H1 (cell line): ENCODE measurements at regions of chr20 and their contacts with region 1.

Region 1: DNA sequence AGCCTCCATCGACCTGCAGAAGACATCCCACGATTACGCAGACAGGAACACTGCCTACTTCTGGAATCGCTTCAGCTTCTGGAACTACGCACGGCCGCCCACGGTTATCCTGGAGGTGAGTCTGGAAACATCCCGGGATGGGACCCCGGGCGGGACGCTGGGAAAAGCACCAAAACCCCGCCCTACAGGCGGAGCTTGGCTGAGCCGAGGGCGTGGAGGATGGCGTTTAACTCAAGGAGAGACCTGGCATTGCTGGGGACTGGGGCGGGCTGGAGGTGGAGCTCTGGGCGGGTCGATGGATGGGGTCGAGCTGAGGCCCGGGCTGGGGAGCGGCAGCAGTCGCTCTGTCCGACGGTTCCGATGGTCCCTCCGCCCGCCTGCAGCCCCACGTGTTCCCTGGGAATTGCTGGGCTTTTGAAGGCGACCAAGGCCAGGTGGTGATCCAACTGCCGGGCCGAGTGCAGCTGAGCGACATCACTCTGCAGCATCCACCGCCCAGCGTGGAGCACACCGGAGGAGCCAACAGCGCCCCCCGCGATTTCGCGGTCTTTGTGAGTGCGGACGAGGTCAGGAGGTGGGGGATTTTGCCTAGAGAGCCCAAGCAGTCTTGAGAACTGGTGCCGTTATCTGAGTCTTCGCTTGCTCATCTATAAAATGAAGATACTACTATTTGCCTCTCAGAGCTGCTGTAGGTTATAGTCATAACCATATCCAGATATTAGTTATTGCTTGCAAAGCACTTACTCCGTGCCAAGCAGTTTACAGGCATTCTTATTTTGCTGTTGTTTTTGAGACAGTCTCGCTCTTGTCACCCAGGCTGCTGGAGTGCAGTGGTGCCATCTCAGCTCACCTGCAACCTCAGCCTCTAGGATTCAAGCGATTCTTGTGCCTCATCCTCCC is 3.8 kb downstream of the SPAG4 start:
- DNase-seq: peak; percentile 73 to 95
- H3K4me3 ChIP-seq: peak overlapping the region; percentile 44 to 63 (median 55)
- H3K27ac ChIP-seq: no peak overlapping the region
- H3K4me1 ChIP-seq: peaks cover 0 to 19% (median 8%) of the 10 kb centered on the region in 4 experiments; a peak in 6 of 7 replicates
- H3K27me3 ChIP-seq: peaks cover 0 to 8% (median 7%) of the 10 kb centered on the region in 4 experiments; a peak in 3 of 7 replicates
- CTCF ChIP-seq: peak; percentile 64 to 79 (median 71)
- EP300 ChIP-seq: no peak
- POLR2A ChIP-seq: peak; percentile 26 to 79
- RAD21 ChIP-seq: peak; percentile 29 to 46; a peak in 3 of 4 replicates

Region 2: DNA sequence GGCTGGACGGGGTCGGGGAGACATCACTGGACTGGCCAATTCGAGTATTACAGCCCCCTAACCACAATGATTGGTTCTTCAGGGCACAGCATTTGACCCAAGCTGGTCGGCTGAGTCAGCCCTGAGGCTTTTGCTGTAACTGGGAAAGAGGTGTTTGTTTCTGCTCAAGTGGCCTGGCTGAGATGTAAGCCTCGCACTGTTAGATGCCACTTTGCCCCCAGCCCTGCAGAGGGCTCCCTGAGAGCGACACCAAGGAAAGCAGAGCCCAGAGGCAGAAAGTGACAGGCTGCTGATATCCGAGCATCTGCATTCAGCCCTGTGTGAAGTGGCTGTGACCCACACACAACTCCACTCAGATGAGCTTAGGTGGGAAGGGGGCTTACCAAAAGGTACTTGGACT is 58.2 kb before region 1 on chr20:
- CTCF ChIA-PET with region 1: interaction called, 5 read pairs
- POLR2A ChIA-PET with region 1: interaction called, 13 read pairs
- DNase-seq: peak in 1 of 2 experiments; percentile 66
- H3K4me3 ChIP-seq: no peak overlapping the region
- H3K27ac ChIP-seq: no peak overlapping the region
- H3K4me1 ChIP-seq: peaks cover 0 to 4% (median 2%) of the 10 kb centered on the region in 4 experiments; a peak in 4 of 7 replicates
- H3K27me3 ChIP-seq: no peaks in the 10 kb centered on the region
- CTCF ChIP-seq: peak; percentile 61 to 76 (median 61)
- EP300 ChIP-seq: no peak
- POLR2A ChIP-seq: no peak
- RAD21 ChIP-seq: peak; percentile 73 to 79

Region 3: DNA sequence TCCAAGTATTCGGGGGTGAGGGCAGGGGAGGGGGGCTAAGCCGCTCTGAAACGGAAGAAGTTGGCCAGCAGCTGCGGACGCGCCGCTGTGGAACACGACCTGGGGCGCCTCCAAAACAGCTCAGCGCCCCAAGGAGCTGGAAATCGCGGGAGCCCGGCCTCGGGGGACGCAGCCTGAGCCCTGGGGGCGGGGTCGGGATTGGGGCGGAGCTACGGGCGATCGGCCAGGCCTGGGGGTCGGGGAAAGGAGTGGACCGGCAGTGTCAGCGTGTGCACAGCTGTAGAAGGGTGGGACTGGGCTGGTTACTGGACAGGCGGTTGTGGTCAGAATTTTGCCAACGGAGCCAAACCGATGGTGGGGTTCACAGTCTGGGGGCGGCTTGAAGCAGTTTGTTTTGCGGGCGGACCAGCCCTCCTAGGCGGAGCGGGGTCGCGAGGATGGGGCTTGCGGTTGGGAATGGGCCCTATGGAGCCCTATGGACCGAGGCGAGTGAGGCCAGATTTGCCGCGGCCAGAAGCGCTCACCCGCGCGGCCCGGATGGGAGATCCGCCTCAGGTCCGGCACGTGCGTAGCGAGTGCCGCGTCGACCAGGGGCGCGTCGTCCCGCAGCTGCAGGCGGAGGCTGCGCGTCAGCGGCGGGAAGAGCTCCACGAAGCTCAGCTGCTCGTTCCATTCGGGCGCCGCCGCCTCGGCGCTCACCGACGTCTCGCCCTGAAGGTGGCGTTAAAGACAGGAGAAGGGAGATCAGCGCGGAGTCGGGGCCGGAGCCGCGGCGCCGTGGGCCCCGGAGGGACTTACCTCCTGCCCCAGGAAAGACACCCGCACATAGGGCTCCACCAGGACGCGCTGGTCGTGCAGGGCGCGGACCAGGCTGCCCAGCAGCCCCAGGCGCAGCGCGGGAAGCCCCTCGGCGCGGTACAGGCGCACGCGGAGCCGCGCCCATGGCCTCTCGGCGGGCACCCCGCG is 18.2 kb before region 1 on chr20:
- CTCF ChIA-PET with region 1: interaction called, 121 read pairs
- POLR2A ChIA-PET with region 1: interaction called, 14 read pairs
- DNase-seq: peak in 1 of 2 experiments; percentile 91
- H3K4me3 ChIP-seq: peak overlapping the region; percentile 28 to 66 (median 46)
- H3K27ac ChIP-seq: no peak overlapping the region
- H3K4me1 ChIP-seq: peaks cover 0 to 14% (median 7%) of the 10 kb centered on the region in 4 experiments; a peak in 4 of 7 replicates
- H3K27me3 ChIP-seq: peaks cover 6 to 46% (median 34%) of the 10 kb centered on the region in 4 experiments
- CTCF ChIP-seq: peak; percentile 16 to 42 (median 24); a peak in 3 of 4 replicates
- EP300 ChIP-seq: no peak
- POLR2A ChIP-seq: no peak
- RAD21 ChIP-seq: peak; percentile 25 to 29; a peak in 2 of 4 replicates

Region 4: DNA sequence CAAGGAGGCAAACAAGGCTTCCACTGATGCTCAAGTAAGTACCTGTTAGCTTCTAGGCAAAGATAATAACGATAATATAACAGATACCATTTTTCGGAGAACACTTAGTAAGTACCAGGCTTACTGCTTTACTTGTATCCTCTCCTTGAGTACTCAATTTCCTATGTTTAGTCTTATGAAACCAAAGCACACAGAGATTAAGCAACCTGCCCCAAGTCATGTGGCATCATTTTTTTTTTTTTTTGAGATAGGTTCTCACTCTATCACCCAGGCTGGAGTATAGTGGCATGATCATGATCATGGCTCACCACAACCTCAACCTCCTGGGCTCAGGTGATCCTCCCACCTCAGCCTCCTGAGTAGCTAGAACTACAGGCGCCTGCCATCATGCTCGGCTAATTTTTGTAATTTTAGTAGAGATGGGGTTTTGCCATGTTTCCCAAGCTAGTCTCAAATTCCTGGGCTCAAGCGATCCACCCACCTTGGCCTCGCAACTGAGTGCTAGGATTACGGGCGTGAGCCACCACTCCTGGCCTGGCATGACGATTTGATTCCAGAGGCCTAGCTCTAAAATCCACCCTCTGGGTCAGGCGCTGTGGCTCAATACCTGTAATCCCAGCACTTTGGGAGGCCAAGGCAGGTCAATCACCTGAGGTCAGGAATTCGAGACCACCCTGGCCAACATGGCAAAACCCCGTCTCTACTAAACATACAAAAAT is 10.1 kb after region 1 on chr20:
- CTCF ChIA-PET with region 1: interaction called, 37 read pairs
- POLR2A ChIA-PET with region 1: interaction called, 23 read pairs
- DNase-seq: no peak
- H3K4me3 ChIP-seq: no peak overlapping the region
- H3K27ac ChIP-seq: no peak overlapping the region
- H3K4me1 ChIP-seq: no peaks in the 10 kb centered on the region
- H3K27me3 ChIP-seq: no peaks in the 10 kb centered on the region
- CTCF ChIP-seq: no peak
- EP300 ChIP-seq: no peak
- POLR2A ChIP-seq: no peak
- RAD21 ChIP-seq: no peak

Region 5: GRCh38 chr20:35635652-35636051 is 16.2 kb after region 1 on chr20:
- CTCF ChIA-PET with region 1: interaction called, 37 read pairs
- POLR2A ChIA-PET with region 1: interaction called, 23 read pairs
- DNase-seq: peak in 1 of 2 experiments; percentile 31
- H3K4me3 ChIP-seq: no peak overlapping the region
- H3K27ac ChIP-seq: no peak overlapping the region
- H3K4me1 ChIP-seq: peaks cover 0 to 9% (median 2%) of the 10 kb centered on the region in 4 experiments; a peak in 3 of 7 replicates
- H3K27me3 ChIP-seq: no peaks in the 10 kb centered on the region
- CTCF ChIP-seq: no peak
- EP300 ChIP-seq: no peak
- POLR2A ChIP-seq: no peak
- RAD21 ChIP-seq: no peak

Region 6: DNA sequence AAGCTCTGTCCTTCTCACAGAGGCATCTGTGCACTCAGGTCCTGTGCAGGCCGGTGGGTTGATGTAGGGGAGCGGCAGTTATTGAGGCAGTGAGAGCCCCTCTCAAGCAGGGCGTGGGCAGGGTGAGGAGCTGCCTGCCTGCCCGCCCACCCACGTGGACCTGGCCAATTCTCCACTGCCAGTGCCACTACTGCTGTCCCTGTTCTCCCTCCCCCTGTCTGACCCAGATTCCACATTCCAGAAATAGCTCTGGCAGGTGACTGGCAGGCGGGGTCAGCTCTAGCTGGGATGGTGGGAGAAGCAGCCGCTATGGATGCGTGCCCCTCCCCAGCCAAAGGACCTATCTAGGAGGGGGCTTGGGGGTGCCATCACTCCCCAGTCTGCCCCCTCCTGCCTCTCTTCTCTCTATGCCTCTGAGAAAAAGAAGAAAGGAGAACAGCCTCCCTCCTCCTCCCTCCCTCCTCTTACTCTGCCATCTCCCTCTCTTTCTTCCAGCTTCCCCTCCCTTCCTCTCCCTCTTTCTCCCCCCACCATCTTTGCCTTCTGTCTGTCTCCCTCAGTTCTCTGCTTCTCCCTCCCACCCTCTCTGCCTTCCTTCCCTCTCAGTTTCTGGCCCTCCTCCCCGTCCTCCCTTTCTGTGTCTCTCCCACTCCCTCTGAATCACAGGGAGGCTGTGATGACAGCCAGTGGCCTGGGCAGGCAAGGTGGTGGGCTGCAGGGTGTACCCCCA is 835.4 kb after region 1 on chr20:
- CTCF ChIA-PET with region 1: no interaction called
- POLR2A ChIA-PET with region 1: no interaction called
- DNase-seq: peak in 1 of 2 experiments; percentile 54
- H3K4me3 ChIP-seq: no peak overlapping the region
- H3K27ac ChIP-seq: peak overlapping the region; percentile 6; the same call in 1 of the 2 replicates
- H3K4me1 ChIP-seq: peaks cover 3 to 12% (median 9%) of the 10 kb centered on the region in 4 experiments
- H3K27me3 ChIP-seq: no peaks in the 10 kb centered on the region
- CTCF ChIP-seq: no peak
- EP300 ChIP-seq: no peak
- POLR2A ChIP-seq: no peak
- RAD21 ChIP-seq: no peak